OCI-LY7 (cell line): ENCODE measurements at regions of chr9 and their contacts with region 1.

Region 1: DNA sequence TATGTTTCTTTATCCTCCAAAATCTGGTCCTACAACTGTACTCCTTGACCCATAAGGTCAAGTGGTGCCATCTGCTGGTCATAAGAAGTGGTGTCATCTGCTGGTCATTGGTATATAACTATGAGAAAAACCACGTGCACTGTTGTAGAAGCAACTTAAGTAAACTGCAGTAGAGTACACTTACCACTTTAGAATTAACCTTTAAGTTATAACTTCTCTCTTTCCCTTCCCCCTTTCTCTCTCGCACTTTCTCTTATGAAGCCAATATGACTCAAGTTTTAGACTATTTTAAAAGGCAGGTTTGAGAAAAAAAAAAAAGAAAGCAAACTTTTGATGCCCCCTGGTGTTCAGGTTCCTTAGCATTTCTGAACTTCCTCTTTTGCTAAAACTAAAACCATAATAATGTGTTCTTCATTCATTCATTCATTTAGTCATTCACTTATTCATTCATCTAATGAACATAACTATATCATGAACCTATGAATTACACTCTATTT is 12.8 kb upstream of the MTAP start:
- DNase-seq: peak; percentile 90
- H3K4me3 ChIP-seq: peak overlapping the region; percentile 33
- H3K27ac ChIP-seq: no peak overlapping the region
- H3K4me1 ChIP-seq: peaks cover 5% of the 10 kb centered on the region
- CTCF ChIP-seq: peak; percentile 99

Region 2: GRCh38 chr9:21317956-21318923 is 471.3 kb before region 1 on chr9:
- CTCF ChIA-PET with region 1: no interaction called
- POLR2A ChIA-PET with region 1: no interaction called
- intact Hi-C with region 1: loop called (anchors 2 kb)
- DNase-seq: peak; percentile 54
- H3K4me3 ChIP-seq: no peak overlapping the region
- H3K27ac ChIP-seq: no peak overlapping the region
- H3K4me1 ChIP-seq: no peaks in the 10 kb centered on the region
- CTCF ChIP-seq: peak; percentile 84

Region 3: GRCh38 chr9:21326526-21327139 is 463.0 kb before region 1 on chr9:
- CTCF ChIA-PET with region 1: interaction called, 3 read pairs
- POLR2A ChIA-PET with region 1: no interaction called
- intact Hi-C with region 1: loop called (anchors 2 kb)
- DNase-seq: peak; percentile 67
- H3K4me3 ChIP-seq: no peak overlapping the region
- H3K27ac ChIP-seq: no peak overlapping the region
- H3K4me1 ChIP-seq: peaks cover 8% of the 10 kb centered on the region
- CTCF ChIP-seq: peak; percentile 92

Region 4: DNA sequence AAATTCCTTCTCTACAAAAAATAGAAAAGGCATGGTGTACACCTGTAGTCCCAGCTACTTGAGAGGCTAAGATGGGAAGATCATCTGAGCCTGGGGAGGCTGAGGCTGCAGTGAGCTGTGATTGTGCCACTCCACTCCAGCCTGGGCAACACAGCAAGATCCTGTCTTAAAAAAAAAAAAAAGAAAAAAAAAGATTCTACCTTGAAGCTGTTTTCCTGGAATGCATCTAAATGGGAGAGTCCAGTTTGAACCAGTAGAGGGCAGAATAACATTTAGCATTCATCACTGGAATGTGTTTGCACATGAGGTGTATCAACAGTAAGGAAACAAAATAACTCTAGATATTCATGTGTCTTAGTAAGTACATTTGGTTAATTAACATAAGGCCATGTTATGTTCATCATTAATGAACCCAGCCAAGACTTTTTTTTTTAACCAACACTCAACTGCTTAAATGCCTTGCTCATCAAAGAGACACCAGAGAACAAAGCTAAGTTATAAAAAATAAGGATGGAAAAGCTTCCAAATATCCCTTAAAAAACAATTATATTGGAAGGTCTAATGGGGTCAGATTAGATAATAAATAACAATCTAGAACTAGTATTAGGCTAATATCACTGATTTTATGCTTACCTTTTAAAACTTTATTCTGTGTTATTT is 323.6 kb before region 1 on chr9:
- CTCF ChIA-PET with region 1: no interaction called
- POLR2A ChIA-PET with region 1: no interaction called
- intact Hi-C with region 1: loop called (anchors 1 kb)
- DNase-seq: peak; percentile 41
- H3K4me3 ChIP-seq: no peak overlapping the region
- H3K27ac ChIP-seq: no peak overlapping the region
- H3K4me1 ChIP-seq: no peaks in the 10 kb centered on the region
- CTCF ChIP-seq: peak; percentile 84

Region 5: DNA sequence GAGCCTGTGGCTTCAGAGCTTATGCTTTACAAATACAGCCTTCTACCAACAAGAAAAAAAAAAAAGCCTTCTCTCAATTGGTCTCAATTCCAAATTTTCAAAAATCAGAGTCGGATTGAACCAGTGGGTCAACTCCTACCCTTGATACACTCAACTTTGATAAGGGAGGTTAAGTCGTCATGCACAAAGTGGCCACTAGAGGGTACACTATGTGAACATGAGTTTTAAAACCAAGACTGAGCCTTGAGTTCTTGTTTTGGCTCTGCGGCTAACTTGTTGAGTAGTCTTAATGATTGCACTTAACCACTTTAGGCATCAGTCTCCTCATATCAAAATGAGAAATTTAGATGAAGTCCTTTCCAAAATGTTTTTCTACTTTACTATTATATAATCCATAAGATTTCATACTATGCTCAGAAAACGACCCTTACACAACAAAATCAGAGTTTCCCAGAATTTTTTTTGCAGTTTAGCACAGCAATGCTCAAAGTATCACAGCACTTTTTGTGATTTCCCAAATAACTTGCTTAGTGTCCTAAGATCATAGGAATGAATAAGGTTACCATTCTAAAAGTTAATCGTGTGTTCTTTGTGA is 80.0 kb before region 1 on chr9:
- CTCF ChIA-PET with region 1: no interaction called
- POLR2A ChIA-PET with region 1: interaction called, 3 read pairs
- intact Hi-C with region 1: loop called (anchors 2 kb)
- DNase-seq: peak; percentile 69
- H3K4me3 ChIP-seq: no peak overlapping the region
- H3K27ac ChIP-seq: no peak overlapping the region
- H3K4me1 ChIP-seq: no peaks in the 10 kb centered on the region
- CTCF ChIP-seq: peak; percentile 90